ENCODE measurements at regions of chr19 and their contacts with region 1.

Region 1: DNA sequence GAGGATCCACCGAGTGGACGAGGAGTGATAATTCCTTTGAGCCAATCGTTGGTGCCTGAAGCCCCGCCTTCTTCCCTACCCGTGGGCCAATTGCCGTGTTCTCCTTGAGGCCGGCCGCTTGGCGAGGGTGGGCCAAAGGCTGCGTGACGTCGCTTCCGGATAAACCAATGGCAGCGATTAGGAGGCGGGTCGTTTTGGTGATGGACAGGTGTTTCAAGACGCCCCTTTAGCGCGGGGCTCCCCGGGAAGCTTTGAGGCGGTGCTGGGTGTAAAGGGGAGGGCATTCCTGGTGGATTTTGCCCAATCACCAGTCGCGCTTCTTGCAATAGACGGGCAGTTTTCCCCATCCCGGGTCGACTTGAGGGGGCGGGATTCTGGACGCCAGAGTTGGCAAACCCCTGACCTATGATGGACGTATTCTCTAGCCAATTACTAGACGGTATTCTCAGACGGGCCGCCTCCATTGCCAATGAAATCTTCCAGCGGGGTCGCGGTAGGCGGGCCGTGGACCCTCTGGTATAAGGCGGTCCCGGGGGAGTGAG is 310 bp upstream of the PRMT1 start:
- DNase-seq: peak; percentile 100
- H3K4me3 ChIP-seq: peak overlapping the region; percentile 76 to 99 (median 86)
- H3K27ac ChIP-seq: peak overlapping the region; percentile 88 to 97 (median 94)
- H3K4me1 ChIP-seq: peaks cover 45 to 64% (median 57%) of the 10 kb centered on the region in 4 donors
- H3K27me3 ChIP-seq: no peaks in the 10 kb centered on the region
- CTCF ChIP-seq: peak in 1 of 3 experiments; percentile 13
- EP300 ChIP-seq: no peak
- POLR2A ChIP-seq: no peak

Region 2: DNA sequence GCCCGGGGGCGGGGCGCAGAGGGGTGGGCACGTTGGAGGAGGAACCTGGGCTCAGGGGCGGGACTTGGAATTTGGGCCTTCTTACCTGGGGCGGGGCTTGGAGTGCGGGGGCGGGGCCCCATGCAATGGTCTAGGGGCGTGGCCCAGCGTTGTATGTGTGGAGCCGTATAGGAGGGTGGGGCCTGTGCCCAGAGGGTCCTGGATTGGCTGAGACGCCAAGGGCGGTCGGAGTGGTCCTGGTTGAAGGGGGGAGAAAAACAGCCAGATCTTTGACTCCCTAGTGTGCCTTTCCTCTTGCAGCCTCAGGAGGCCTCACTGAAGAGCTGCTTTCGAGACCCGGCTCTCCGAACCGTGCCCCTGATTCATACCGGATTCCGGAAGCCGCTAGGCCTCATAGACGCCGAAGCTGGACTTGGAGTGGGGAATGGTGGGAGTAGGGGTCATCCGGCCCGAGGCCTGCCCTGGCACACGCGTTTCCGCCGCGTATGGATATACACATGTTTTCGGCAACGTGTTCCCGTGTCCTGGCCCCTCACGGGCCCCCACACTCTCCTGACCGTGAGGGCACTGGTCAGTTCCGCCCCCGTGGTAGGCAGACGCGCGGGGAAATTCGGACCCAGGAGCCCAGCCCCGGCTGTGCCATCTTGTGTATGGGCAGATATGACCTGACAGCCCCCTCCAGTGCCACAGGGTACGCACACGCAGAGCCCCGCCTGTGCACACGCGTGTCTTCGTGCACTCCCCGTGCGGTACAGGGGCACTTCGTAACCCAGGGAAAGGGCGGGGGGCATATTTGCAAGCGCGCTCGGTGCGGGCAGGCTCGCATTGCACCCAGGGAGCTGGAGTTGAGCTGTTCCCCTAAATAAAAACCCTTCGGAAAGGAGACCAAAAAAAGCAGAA is 86.4 kb before region 1 on chr19:
- intact Hi-C with region 1: loop called (anchors 5 kb)
- DNase-seq: peak; percentile 99
- H3K4me3 ChIP-seq: peak overlapping the region; percentile 85 to 96 (median 92)
- H3K27ac ChIP-seq: peak overlapping the region; percentile 84 to 96 (median 94)
- H3K4me1 ChIP-seq: peaks cover 22 to 44% (median 40%) of the 10 kb centered on the region in 4 donors
- H3K27me3 ChIP-seq: no peaks in the 10 kb centered on the region
- CTCF ChIP-seq: peak in 1 of 3 experiments; percentile 16
- EP300 ChIP-seq: no peak
- POLR2A ChIP-seq: no peak

Measured in esophagus muscularis mucosa (tissue), 4 donors.